PC-3 (cell line): ENCODE measurements at regions of chr14 and their contacts with region 1.

Region 1: DNA sequence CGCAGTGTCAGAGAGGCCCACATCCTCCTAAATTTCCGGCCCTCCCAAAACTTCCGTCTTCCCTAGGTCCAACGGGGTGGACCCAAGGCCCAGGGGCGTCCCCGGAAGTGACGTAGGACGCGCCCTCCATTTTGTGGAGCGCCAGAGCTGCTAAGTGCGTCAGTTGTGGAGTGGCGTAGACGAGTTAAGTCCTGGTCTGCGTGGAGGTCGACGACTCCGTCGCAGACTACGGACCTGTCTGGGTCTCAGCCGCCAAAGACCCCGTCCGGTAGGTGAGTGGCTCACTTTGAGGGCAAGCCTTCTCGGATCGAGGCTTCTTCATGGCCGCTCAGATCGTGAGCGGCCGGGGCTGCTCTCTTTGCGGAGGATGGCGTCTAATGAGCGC is at the start of gene SRSF5:
- DNase-seq: peak; percentile 98
- ATAC-seq: peak; percentile 91
- H3K4me3 ChIP-seq: peak within 1 kb of the TSS; percentile 89
- H3K27ac ChIP-seq: peak within 1 kb of the TSS; percentile 80
- H3K4me1 ChIP-seq: peaks cover 21% of the 10 kb centered on the region
- H3K27me3 ChIP-seq: no peaks in the 10 kb centered on the region
- CTCF ChIP-seq: no peak
- total RNA-seq, gene SRSF5: 213 and 309 TPM in 2 replicates

Region 2: DNA sequence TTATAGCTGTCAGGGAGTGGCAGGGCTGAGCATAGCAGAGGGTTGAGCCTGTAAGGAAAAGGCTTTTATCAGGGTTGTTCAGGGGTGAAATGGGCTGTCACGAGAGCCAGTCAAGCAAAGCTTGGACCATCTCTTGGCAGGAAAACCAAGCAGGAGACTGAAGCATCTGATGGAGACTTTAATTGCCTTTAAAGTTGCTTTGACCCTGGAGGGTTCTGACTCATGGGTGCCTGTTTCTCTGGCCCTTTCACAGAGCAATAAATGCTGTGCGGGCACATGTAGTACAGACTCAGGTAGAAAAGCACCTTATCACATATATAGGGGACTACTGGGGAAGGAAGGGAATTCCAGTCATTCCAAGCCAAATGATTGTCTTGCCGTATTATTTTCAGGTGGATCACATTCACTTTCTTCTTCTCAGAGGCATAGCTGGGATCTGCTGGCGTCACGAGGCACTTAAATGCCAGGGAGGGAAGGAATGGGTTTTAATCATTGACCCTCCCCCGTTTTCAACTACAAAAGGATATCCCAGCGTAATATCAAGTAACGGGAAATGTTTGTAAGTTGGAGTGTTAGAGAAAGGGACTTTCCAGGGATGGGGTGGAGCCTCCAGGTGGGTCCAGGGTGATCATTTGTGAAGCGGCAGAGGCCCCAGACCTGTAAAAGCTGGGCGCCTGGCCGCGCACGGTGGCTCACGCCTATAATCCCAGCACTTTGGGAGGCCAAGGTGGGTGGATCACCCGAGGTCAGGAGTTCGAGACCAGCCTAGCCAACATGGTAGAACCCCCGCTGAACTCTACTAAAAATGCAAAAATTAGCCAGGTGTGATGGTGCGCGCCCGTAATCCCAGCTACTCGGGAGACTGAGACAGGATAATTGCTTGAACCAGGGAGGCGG is 247.5 kb before region 1 on chr14:
- CTCF ChIA-PET with region 1: no interaction called
- POLR2A ChIA-PET with region 1: no interaction called
- intact Hi-C with region 1: no loop called
- DNase-seq: peak; percentile 17
- ATAC-seq: peak; percentile 49
- H3K4me3 ChIP-seq: no peak overlapping the region
- H3K27ac ChIP-seq: no peak overlapping the region
- H3K4me1 ChIP-seq: no peaks in the 10 kb centered on the region
- H3K27me3 ChIP-seq: peaks cover 62% of the 10 kb centered on the region
- CTCF ChIP-seq: no peak

Region 3: GRCh38 chr14:69741055-69741454 is 25.9 kb before region 1 on chr14:
- CTCF ChIA-PET with region 1: no interaction called
- POLR2A ChIA-PET with region 1: no interaction called
- intact Hi-C with region 1: loop called (anchors 2 kb)
- DNase-seq: peak; percentile 92
- ATAC-seq: peak; percentile 92
- H3K4me3 ChIP-seq: no peak overlapping the region
- H3K27ac ChIP-seq: peak overlapping the region; percentile 40; the same call in 1 of the 2 replicates
- H3K4me1 ChIP-seq: peaks cover 25% of the 10 kb centered on the region
- H3K27me3 ChIP-seq: no peaks in the 10 kb centered on the region
- CTCF ChIP-seq: no peak